ENCODE measurements at regions of chr4 and their contacts with region 1.

Region 1: DNA sequence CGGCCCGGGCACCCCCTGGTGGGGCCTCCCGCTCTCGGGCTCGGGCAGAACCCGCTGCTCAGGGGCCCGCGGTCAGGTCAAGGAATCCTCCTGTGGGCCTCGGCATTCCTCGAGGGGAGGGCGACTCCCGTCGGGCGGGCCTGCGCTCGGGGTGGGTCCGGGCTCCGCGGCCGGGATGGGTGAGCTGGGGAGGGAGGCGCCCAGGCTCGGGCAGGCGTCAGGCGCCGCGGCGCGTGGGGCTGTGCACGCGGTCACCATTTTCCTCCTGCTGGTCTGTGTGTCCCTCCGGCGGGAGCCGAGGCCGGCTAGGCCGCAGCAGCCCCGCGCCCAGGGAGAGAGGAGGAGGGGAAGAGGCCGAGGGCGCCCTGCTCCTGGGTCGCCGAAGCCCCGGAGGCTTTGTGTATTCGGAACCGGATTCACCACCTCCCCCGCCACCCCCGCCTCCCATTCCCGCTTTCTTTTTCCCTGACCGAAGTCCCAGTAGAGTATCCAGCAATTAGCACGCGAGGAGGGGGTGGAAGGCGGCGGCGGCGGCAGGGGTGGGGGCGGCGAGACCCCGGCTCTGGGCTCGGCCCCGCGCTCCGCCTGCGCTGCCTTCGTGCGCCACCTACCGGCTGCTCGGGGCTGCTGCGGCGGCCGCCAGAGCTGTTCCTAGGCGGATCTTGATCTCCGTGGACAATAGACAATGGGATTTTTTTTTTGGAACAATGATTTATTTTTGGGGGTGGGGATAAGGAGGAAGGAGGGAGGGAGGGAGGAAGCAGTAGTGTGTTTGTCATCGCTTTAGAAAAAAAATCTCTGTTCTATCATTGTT is 99.0 kb upstream of the MAML3 start:
- DNase-seq: peak; percentile 88
- ATAC-seq: peak; percentile 92
- H3K4me3 ChIP-seq: peak overlapping the region; percentile 69
- H3K27ac ChIP-seq: peak overlapping the region; percentile 93
- H3K4me1 ChIP-seq: no peaks in the 10 kb centered on the region
- H3K27me3 ChIP-seq: no peaks in the 10 kb centered on the region
- CTCF ChIP-seq: peak; percentile 95

Region 2: DNA sequence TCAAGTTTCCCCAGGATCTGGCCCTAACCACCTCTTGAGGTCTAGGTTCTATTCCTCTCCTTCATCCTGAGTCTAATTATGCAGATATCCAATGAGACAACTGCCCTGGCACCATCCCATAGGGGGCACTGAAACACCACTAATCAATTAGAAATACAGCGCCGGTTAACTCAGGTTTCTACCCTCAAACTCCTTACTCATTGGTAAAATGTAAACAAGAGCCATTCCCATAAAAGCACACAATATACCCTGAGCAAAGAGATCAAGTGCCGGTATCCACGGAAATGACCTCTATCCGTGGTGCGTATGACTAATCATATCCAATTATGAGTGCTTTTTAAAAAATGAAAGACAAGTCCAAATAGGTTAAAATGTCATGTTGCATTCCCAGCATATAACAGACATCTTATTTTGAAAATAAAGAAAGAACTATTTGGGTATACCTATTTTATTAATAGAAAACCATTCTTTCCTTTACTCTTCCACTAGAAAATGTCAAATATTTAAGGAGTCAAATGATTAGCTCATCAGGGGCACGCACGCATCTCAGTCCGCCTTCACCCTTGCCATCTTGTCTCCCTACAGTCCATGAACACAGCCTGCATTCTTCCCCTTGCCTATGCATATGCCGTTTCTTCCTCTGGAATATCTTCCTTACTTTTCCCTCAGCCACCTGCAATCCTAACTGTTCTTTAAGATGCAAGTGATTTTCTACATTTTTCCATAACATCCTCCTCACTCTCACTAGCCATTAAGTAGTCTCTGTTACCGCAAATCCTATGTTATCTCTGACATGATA is 240.1 kb before region 1 on chr4:
- intact Hi-C with region 1: loop called (anchors 10 kb)
- DNase-seq: no peak
- ATAC-seq: peak; percentile 99
- H3K4me3 ChIP-seq: no peak overlapping the region
- H3K27ac ChIP-seq: no peak overlapping the region
- H3K4me1 ChIP-seq: peaks cover 5% of the 10 kb centered on the region
- H3K27me3 ChIP-seq: no peaks in the 10 kb centered on the region
- CTCF ChIP-seq: peak; percentile 66

Region 3: DNA sequence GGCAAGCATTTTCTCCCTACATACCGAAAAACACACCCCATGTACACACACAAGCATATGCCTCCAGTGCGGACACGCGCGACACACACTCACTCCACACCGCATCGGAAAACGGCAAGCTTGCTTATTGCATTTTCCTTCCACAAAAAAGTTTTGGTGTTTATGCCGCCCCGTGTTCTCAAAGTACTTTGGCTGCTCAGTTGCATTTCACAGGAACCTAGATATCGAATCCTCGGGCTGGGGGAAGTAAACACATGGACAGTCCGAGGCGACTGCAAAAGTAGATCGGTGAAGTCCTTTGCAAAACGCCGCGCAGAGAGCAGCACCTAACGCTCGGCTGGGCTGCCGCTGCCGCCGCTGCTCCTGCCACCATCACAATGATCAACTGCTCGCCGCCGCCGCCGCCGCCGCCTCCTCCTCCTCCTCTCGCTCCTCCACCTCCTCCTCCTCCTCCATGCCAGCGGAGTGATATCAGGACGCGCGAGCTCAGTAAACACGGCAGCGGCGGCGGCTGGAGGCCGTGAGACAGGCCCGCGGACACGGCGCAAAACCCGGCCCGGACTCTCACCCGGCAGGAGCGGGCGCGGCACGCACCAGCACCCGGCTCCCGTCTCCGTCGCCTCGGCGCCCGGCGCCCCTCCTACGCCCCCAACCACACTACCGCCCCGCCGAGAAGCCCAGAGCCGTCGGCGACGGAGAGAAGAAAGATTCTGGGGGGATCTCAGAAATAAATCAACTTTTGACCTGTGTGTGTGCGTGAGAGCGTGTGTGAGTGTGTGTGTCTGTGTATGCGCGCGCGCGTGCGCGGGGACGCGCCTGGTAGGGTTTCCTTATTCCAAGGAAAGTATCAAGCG is 99.0 kb before region 1 on chr4 and contains the start of gene MAML3:
- intact Hi-C with region 1: loop called (anchors 5 kb)
- DNase-seq: peak; percentile 97
- ATAC-seq: peak; percentile 77
- H3K4me3 ChIP-seq: peak within 1 kb of the TSS; percentile 81
- H3K27ac ChIP-seq: peak within 1 kb of the TSS; percentile 97
- H3K4me1 ChIP-seq: peaks cover 17% of the 10 kb centered on the region
- H3K27me3 ChIP-seq: no peaks in the 10 kb centered on the region
- CTCF ChIP-seq: no peak
- total RNA-seq, gene MAML3: 13.1 TPM